ENCODE measurements at regions of chr15 and their contacts with region 1.

Region 1: GRCh38 chr15:27238209-27238608 is 267.2 kb downstream of the GABRG3 start:
- DNase-seq: no peak
- H3K4me3 ChIP-seq: no peak overlapping the region
- H3K4me3 Mint-ChIP-seq: no peak overlapping the region
- H3K27ac ChIP-seq: no peak overlapping the region
- H3K27ac Mint-ChIP-seq: no peak overlapping the region
- H3K4me1 ChIP-seq: no peaks in the 10 kb centered on the region
- H3K4me1 Mint-ChIP-seq: no peaks in the 10 kb centered on the region
- H3K27me3 ChIP-seq: no peaks in the 10 kb centered on the region
- H3K27me3 Mint-ChIP-seq: peaks cover 0 to 1% (median 0%) of the 10 kb centered on the region in 3 donors
- CTCF ChIP-seq: no peak

Region 2: DNA sequence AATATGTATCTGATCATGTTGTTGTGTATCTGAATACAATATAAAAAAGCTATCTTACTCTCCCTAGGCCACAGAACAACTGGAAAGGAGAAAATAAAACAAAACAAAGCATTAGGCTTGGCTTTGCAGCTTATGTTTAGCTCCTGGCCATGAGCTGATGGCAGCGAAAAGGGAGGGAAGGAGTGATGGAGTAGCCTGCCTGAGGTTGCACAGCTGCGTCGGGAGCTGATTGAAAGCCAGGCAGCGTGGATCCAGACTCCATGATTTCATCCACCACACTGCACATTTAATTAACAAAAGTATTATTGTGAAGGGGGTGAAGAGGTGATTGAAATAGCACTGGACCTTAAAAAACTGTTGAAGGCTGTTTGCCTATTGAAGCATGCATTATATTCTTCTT is 55.0 kb before region 1 on chr15:
- intact Hi-C with region 1: loop called in 1 of 2 experiments (anchors 10 kb)
- DNase-seq: no peak
- H3K4me3 ChIP-seq: no peak overlapping the region
- H3K4me3 Mint-ChIP-seq: no peak overlapping the region
- H3K27ac ChIP-seq: no peak overlapping the region
- H3K27ac Mint-ChIP-seq: no peak overlapping the region
- H3K4me1 ChIP-seq: no peaks in the 10 kb centered on the region
- H3K4me1 Mint-ChIP-seq: no peaks in the 10 kb centered on the region
- H3K27me3 ChIP-seq: no peaks in the 10 kb centered on the region
- H3K27me3 Mint-ChIP-seq: peaks cover 0 to 3% (median 1%) of the 10 kb centered on the region in 3 donors
- CTCF ChIP-seq: no peak

Region 3: DNA sequence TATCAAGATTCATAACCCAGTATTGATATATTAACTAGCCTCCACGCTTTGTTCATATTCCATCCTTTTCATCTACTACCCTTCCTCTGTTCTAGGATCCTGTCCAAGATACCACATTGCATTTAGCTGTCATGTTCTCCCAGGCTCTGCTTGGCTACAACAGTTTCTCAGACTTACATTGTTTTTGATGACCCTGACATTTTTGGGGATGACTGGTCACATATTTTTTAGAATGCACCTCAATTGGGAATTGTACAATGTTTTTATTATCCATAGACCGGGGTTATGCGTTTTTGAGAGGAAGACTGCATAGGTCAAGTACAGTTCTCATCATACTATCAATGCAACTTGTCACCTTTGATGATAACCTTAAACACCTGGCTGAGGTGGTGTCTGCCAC is 154.0 kb after region 1 on chr15:
- intact Hi-C with region 1: no loop called
- DNase-seq: no peak
- H3K4me3 ChIP-seq: no peak overlapping the region
- H3K4me3 Mint-ChIP-seq: no peak overlapping the region
- H3K27ac ChIP-seq: no peak overlapping the region
- H3K27ac Mint-ChIP-seq: no peak overlapping the region
- H3K4me1 ChIP-seq: no peaks in the 10 kb centered on the region
- H3K4me1 Mint-ChIP-seq: no peaks in the 10 kb centered on the region
- H3K27me3 ChIP-seq: no peaks in the 10 kb centered on the region
- H3K27me3 Mint-ChIP-seq: peaks cover 0 to 2% (median 0%) of the 10 kb centered on the region in 3 donors
- CTCF ChIP-seq: no peak

Measured in CD14-positive monocyte (primary cell).